ENCODE measurements at regions of chr9 and their contacts with region 1.

Region 1: GRCh38 chr9:16417161-16417560 is 453.3 kb downstream of the BNC2 start:
- DNase-seq: peak; percentile 96
- ATAC-seq: peak; percentile 70
- H3K4me3 ChIP-seq: peak overlapping the region; percentile 20; the same call in 1 of the 2 replicates
- H3K27ac ChIP-seq: peak overlapping the region; percentile 54; the same call in 1 of the 2 replicates
- H3K4me1 ChIP-seq: peaks cover 14% of the 10 kb centered on the region
- H3K27me3 ChIP-seq: no peaks in the 10 kb centered on the region; the same call in 1 of the 2 replicates
- CTCF ChIP-seq: no peak
- POLR2A ChIP-seq: no peak
- RAD21 ChIP-seq: peak; percentile 30

Region 2: DNA sequence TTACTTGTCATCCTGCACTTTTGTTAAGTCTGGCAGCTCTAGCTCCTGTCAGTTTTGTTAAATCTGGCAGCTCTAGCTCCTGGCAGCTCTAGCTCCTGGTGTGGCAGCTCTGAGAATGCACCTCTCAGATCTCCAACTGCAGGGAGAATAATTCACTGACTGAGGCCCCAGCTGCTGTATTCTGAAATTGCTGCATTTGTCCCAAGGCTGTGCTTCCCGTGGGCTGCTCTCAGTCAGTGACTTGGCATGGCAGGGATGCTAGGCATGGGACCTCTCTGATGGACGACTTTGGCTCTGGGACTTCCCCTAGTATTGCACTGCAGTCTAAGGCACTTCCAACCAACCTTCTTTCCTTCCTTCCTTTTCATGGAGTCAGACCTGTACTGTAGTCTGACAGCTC is 388.6 kb before region 1 on chr9:
- CTCF ChIA-PET with region 1: no interaction called
- POLR2A ChIA-PET with region 1: no interaction called
- dilution Hi-C with region 1: no loop called
- in situ Hi-C with region 1: no loop called
- intact Hi-C with region 1: loop called (anchors 10 kb)
- DNase-seq: peak; percentile 44
- ATAC-seq: no peak
- H3K4me3 ChIP-seq: no peak overlapping the region
- H3K27ac ChIP-seq: no peak overlapping the region
- H3K4me1 ChIP-seq: peaks cover 30% of the 10 kb centered on the region
- H3K27me3 ChIP-seq: no peaks in the 10 kb centered on the region
- CTCF ChIP-seq: no peak
- POLR2A ChIP-seq: no peak
- RAD21 ChIP-seq: no peak

Region 3: GRCh38 chr9:16207161-16207560 is 210.0 kb before region 1 on chr9:
- CTCF ChIA-PET with region 1: no interaction called
- POLR2A ChIA-PET with region 1: no interaction called
- dilution Hi-C with region 1: no loop called
- in situ Hi-C with region 1: no loop called
- intact Hi-C with region 1: no loop called
- DNase-seq: peak; percentile 74
- ATAC-seq: peak; percentile 50
- H3K4me3 ChIP-seq: no peak overlapping the region
- H3K27ac ChIP-seq: no peak overlapping the region
- H3K4me1 ChIP-seq: peaks cover 15% of the 10 kb centered on the region
- H3K27me3 ChIP-seq: no peaks in the 10 kb centered on the region
- CTCF ChIP-seq: no peak
- POLR2A ChIP-seq: no peak
- RAD21 ChIP-seq: no peak

Region 4: DNA sequence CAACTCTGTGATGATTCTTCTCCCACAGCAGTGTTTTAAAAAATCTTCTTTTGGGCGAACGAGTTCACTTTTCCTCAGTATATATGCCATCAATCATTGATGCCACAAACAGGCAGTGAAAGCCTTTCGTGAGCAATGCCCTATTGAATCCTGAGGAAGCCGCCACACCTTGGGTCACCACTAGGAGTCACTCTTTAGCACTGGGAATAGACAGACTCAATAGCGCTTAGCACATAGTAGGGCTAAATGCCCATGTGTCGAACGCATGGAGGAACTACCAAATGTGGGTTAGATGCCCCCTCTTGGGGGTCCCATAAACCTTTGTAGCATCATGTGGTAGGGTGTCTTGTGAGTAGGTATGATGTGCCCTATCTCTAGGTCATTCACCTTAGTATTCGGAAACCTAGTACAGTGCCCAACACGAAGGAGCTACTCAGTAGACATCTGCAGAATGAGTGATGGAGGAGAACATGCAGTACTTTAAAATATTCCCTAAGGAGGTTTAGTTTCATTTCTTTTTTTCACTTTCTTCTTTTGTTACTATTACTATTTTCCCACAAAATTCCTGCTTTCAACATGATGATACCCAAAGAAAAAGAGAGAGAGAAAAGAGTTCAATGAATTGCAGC is 150.4 kb before region 1 on chr9:
- CTCF ChIA-PET with region 1: no interaction called
- POLR2A ChIA-PET with region 1: no interaction called
- dilution Hi-C with region 1: no loop called
- in situ Hi-C with region 1: no loop called
- intact Hi-C with region 1: loop called (anchors 5 kb)
- DNase-seq: no peak
- ATAC-seq: no peak
- H3K4me3 ChIP-seq: no peak overlapping the region
- H3K27ac ChIP-seq: no peak overlapping the region
- H3K4me1 ChIP-seq: peaks cover 12% of the 10 kb centered on the region
- H3K27me3 ChIP-seq: peaks cover 10% of the 10 kb centered on the region
- CTCF ChIP-seq: peak; percentile 29
- POLR2A ChIP-seq: no peak
- RAD21 ChIP-seq: peak; percentile 24; the same call in 1 of the 2 replicates

Region 5: GRCh38 chr9:16348531-16348930 is 68.6 kb before region 1 on chr9:
- CTCF ChIA-PET with region 1: no interaction called
- POLR2A ChIA-PET with region 1: no interaction called
- dilution Hi-C with region 1: no loop called
- in situ Hi-C with region 1: no loop called
- intact Hi-C with region 1: no loop called
- DNase-seq: no peak
- ATAC-seq: no peak
- H3K4me3 ChIP-seq: no peak overlapping the region
- H3K27ac ChIP-seq: no peak overlapping the region
- H3K4me1 ChIP-seq: peaks cover 15% of the 10 kb centered on the region
- H3K27me3 ChIP-seq: no peaks in the 10 kb centered on the region
- CTCF ChIP-seq: no peak
- POLR2A ChIP-seq: no peak
- RAD21 ChIP-seq: no peak

Region 6: GRCh38 chr9:16361118-16361517 is 56.0 kb before region 1 on chr9:
- CTCF ChIA-PET with region 1: no interaction called
- POLR2A ChIA-PET with region 1: no interaction called
- dilution Hi-C with region 1: no loop called
- in situ Hi-C with region 1: no loop called
- intact Hi-C with region 1: no loop called
- DNase-seq: peak; percentile 64
- ATAC-seq: peak; percentile 60
- H3K4me3 ChIP-seq: no peak overlapping the region
- H3K27ac ChIP-seq: no peak overlapping the region
- H3K4me1 ChIP-seq: no peaks in the 10 kb centered on the region
- H3K27me3 ChIP-seq: no peaks in the 10 kb centered on the region
- CTCF ChIP-seq: no peak
- POLR2A ChIP-seq: no peak
- RAD21 ChIP-seq: no peak

Region 7: GRCh38 chr9:16385590-16385989 is 31.6 kb before region 1 on chr9:
- CTCF ChIA-PET with region 1: no interaction called
- POLR2A ChIA-PET with region 1: no interaction called
- dilution Hi-C with region 1: no loop called
- in situ Hi-C with region 1: no loop called
- intact Hi-C with region 1: no loop called
- DNase-seq: peak; percentile 80
- ATAC-seq: peak; percentile 54
- H3K4me3 ChIP-seq: no peak overlapping the region
- H3K27ac ChIP-seq: peak overlapping the region; percentile 79
- H3K4me1 ChIP-seq: peaks cover 5% of the 10 kb centered on the region
- H3K27me3 ChIP-seq: no peaks in the 10 kb centered on the region
- CTCF ChIP-seq: no peak
- POLR2A ChIP-seq: no peak
- RAD21 ChIP-seq: no peak

Region 8: GRCh38 chr9:16458696-16459420 is 41.7 kb after region 1 on chr9:
- CTCF ChIA-PET with region 1: no interaction called
- POLR2A ChIA-PET with region 1: no interaction called
- dilution Hi-C with region 1: no loop called
- in situ Hi-C with region 1: no loop called
- intact Hi-C with region 1: loop called (anchors 1 kb)
- DNase-seq: peak; percentile 76
- ATAC-seq: peak; percentile 79
- H3K4me3 ChIP-seq: no peak overlapping the region
- H3K27ac ChIP-seq: peak overlapping the region; percentile 45; the same call in 1 of the 2 replicates
- H3K4me1 ChIP-seq: peaks cover 11% of the 10 kb centered on the region
- H3K27me3 ChIP-seq: no peaks in the 10 kb centered on the region
- CTCF ChIP-seq: no peak
- POLR2A ChIP-seq: no peak
- RAD21 ChIP-seq: no peak

Region 9: GRCh38 chr9:16626577-16627131 is 209.5 kb after region 1 on chr9:
- CTCF ChIA-PET with region 1: no interaction called
- POLR2A ChIA-PET with region 1: no interaction called
- dilution Hi-C with region 1: no loop called
- in situ Hi-C with region 1: no loop called
- intact Hi-C with region 1: loop called (anchors 5 kb)
- DNase-seq: peak; percentile 89
- ATAC-seq: peak; percentile 84
- H3K4me3 ChIP-seq: no peak overlapping the region
- H3K27ac ChIP-seq: peak overlapping the region; percentile 42
- H3K4me1 ChIP-seq: peaks cover 26% of the 10 kb centered on the region
- H3K27me3 ChIP-seq: no peaks in the 10 kb centered on the region
- CTCF ChIP-seq: no peak
- POLR2A ChIP-seq: no peak
- RAD21 ChIP-seq: no peak

Region 10: GRCh38 chr9:16726718-16727451 is 309.7 kb after region 1 on chr9:
- CTCF ChIA-PET with region 1: interaction called, 7 read pairs
- POLR2A ChIA-PET with region 1: no interaction called
- dilution Hi-C with region 1: no loop called
- in situ Hi-C with region 1: no loop called
- intact Hi-C with region 1: loop called (anchors 5 kb)
- DNase-seq: peak; percentile 83
- ATAC-seq: peak; percentile 83
- H3K4me3 ChIP-seq: peak overlapping the region; percentile 62
- H3K27ac ChIP-seq: peak overlapping the region; percentile 97
- H3K4me1 ChIP-seq: peaks cover 12% of the 10 kb centered on the region
- H3K27me3 ChIP-seq: no peaks in the 10 kb centered on the region
- CTCF ChIP-seq: no peak
- POLR2A ChIP-seq: peak; percentile 72
- RAD21 ChIP-seq: no peak